Transverse colon (tissue), 4 donors: ENCODE measurements at regions of chr6 and their contacts with region 1.

Region 1: DNA sequence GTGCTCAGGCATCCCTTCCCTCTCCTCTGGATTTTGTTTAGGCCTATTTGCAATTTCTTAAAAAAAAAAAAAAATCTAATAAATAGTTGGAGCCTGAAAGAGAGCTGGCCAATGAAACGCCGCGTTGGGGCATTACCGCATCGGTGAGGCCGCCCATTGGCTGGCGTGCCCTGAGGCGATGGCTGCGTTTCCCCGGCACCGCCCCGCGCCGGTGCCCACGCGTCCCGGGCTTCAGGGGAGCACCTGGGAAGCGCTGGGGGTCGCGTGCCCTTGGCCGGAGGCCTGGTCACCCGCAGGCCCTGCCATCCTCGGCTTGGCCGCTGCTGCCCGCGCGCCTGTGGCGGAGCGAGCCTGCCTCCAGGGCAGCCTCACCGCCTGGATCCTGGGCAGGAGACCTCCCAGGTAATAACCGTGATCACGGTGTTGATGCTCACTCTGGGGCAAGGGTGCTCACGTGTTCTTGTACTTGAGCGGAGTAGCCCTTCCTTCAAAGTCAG is 155.4 kb downstream of the NRN1 start:
- DNase-seq: peak; percentile 66
- H3K4me3 ChIP-seq: peak overlapping the region in 3 of 4 donors; percentile 38 to 56 (median 39)
- H3K27ac ChIP-seq: peak overlapping the region in 1 of 4 donors; percentile 42
- H3K4me1 ChIP-seq: peaks cover 0 to 12% (median 7%) of the 10 kb centered on the region in 4 donors
- H3K27me3 ChIP-seq: peaks cover 34% of the 10 kb centered on the region
- CTCF ChIP-seq: no peak
- EP300 ChIP-seq: no peak
- POLR2A ChIP-seq: no peak

Region 2: GRCh38 chr6:6494677-6495076 is 643.4 kb after region 1 on chr6:
- in situ Hi-C with region 1: no loop called
- intact Hi-C with region 1: loop called (anchors 5 kb)
- DNase-seq: peak; percentile 47
- H3K4me3 ChIP-seq: no peak overlapping the region
- H3K27ac ChIP-seq: no peak overlapping the region
- H3K4me1 ChIP-seq: no peaks in the 10 kb centered on the region
- H3K27me3 ChIP-seq: peaks cover 1% of the 10 kb centered on the region
- CTCF ChIP-seq: peak in 4 of 5 experiments; percentile 12 to 36 (median 31)
- EP300 ChIP-seq: no peak
- POLR2A ChIP-seq: no peak